ENCODE measurements at regions of chr3 and their contacts with region 1.

Region 1: DNA sequence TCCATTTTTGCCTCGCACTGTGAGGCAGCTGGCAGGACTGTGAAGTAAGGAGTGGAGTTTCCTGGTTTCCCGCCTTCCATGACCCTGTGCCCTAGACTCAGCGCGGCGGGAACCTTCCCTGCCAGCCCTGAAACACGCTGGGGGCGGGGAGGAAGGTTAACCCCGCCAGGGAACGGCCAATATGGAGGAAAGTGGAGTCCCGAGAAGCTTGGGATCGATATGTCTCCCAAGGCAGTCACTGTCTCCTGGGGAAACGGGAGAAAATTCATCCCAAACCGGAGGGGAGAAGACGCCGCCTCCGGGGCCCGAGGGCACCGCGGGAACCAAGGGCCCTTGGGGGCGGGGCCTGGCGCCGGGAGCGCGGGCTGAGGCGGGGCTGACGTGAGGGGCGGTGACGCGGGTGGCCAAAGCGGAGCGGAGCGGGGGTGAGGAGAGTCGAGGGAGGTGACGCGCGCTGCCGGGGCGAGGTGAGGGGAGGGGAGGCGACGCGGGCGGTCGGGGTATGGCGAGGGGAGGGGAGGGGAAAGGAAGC is at the start of gene HMCES:
- DNase-seq: peak; percentile 88 to 98 (median 96)
- ATAC-seq: peak; percentile 94
- H3K4me3 ChIP-seq: peak within 1 kb of the TSS; percentile 59 to 92
- H3K4me3 Mint-ChIP-seq: peak within 1 kb of the TSS; percentile 95
- H3K27ac ChIP-seq: peak within 1 kb of the TSS; percentile 88 to 93
- H3K27ac Mint-ChIP-seq: peak within 1 kb of the TSS; percentile 97
- H3K4me1 ChIP-seq: peaks cover 39% of the 10 kb centered on the region
- H3K4me1 Mint-ChIP-seq: peaks cover 42% of the 10 kb centered on the region
- H3K27me3 ChIP-seq: no peaks in the 10 kb centered on the region
- H3K27me3 Mint-ChIP-seq: no peaks in the 10 kb centered on the region
- CTCF ChIP-seq: no peak
- total RNA-seq, gene HMCES: 69.5 to 78.7 TPM

Region 2: GRCh38 chr3:129160891-129161859 is 117.3 kb before region 1 on chr3 and contains the start of gene ISY1:
- CTCF ChIA-PET with region 1: no interaction called
- POLR2A ChIA-PET with region 1: no interaction called
- intact Hi-C with region 1: loop called in 1 of 2 experiments (anchors 1 kb)
- DNase-seq: peak; percentile 71 to 97 (median 86)
- ATAC-seq: peak; percentile 80
- H3K4me3 ChIP-seq: peak within 1 kb of the TSS; percentile 84 to 94
- H3K4me3 Mint-ChIP-seq: peak within 1 kb of the TSS; percentile 95
- H3K27ac ChIP-seq: peak within 1 kb of the TSS; percentile 92 to 99
- H3K27ac Mint-ChIP-seq: peak within 1 kb of the TSS; percentile 96
- H3K4me1 ChIP-seq: peaks cover 18% of the 10 kb centered on the region
- H3K4me1 Mint-ChIP-seq: peaks cover 43% of the 10 kb centered on the region
- H3K27me3 ChIP-seq: no peaks in the 10 kb centered on the region
- H3K27me3 Mint-ChIP-seq: no peaks in the 10 kb centered on the region
- CTCF ChIP-seq: peak; percentile 70
- total RNA-seq, gene ISY1: 35.2 to 38.7 TPM

Region 3: GRCh38 chr3:129233538-129233937 is 45.0 kb before region 1 on chr3:
- CTCF ChIA-PET with region 1: no interaction called
- POLR2A ChIA-PET with region 1: no interaction called
- intact Hi-C with region 1: no loop called
- DNase-seq: peak in 1 of 9 experiments; percentile 53
- ATAC-seq: peak; percentile 40
- H3K4me3 ChIP-seq: no peak overlapping the region
- H3K4me3 Mint-ChIP-seq: no peak overlapping the region
- H3K27ac ChIP-seq: no peak overlapping the region
- H3K27ac Mint-ChIP-seq: peak overlapping the region; percentile 5
- H3K4me1 ChIP-seq: no peaks in the 10 kb centered on the region
- H3K4me1 Mint-ChIP-seq: peaks cover 5% of the 10 kb centered on the region
- H3K27me3 ChIP-seq: peaks cover 0 to 3% of the 10 kb centered on the region in 2 experiments
- H3K27me3 Mint-ChIP-seq: peaks cover 2% of the 10 kb centered on the region
- CTCF ChIP-seq: no peak

Region 4: GRCh38 chr3:129399145-129399894 is 120.8 kb after region 1 on chr3:
- CTCF ChIA-PET with region 1: no interaction called
- POLR2A ChIA-PET with region 1: interaction called, 5 read pairs
- intact Hi-C with region 1: loop called (anchors 1 kb)
- DNase-seq: peak; percentile 40 to 96 (median 73)
- ATAC-seq: peak; percentile 83
- H3K4me3 ChIP-seq: peak overlapping the region; percentile 63 to 72
- H3K4me3 Mint-ChIP-seq: peak overlapping the region; percentile 98
- H3K27ac ChIP-seq: peak overlapping the region; percentile 73 to 88
- H3K27ac Mint-ChIP-seq: peak overlapping the region; percentile 99
- H3K4me1 ChIP-seq: peaks cover 12% of the 10 kb centered on the region
- H3K4me1 Mint-ChIP-seq: peaks cover 42% of the 10 kb centered on the region
- H3K27me3 ChIP-seq: no peaks in the 10 kb centered on the region
- H3K27me3 Mint-ChIP-seq: no peaks in the 10 kb centered on the region
- CTCF ChIP-seq: peak; percentile 78

Region 5: DNA sequence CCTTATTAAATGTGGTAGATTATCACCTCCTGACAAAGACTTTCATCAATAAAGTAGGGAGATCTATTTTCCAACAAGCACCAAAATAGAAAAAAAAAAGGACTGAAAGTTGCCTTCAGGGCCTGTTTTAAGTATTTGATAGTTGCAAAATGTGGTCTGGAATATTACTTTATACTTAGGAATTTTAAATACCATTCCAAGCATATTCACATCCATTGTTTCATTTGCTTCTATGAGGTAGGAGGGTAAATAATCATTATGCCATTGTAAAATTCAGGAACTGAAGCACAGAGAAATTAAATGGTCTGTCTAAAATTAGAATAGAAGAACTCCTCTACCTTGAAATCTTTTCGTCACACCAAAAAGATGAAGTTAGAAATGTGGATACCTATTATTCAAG is 505.0 kb after region 1 on chr3:
- CTCF ChIA-PET with region 1: no interaction called
- POLR2A ChIA-PET with region 1: no interaction called
- intact Hi-C with region 1: no loop called
- DNase-seq: no peak
- ATAC-seq: no peak
- H3K4me3 ChIP-seq: no peak overlapping the region
- H3K4me3 Mint-ChIP-seq: no peak overlapping the region
- H3K27ac ChIP-seq: no peak overlapping the region
- H3K27ac Mint-ChIP-seq: no peak overlapping the region
- H3K4me1 ChIP-seq: no peaks in the 10 kb centered on the region
- H3K4me1 Mint-ChIP-seq: peaks cover 4% of the 10 kb centered on the region
- H3K27me3 ChIP-seq: no peaks in the 10 kb centered on the region
- H3K27me3 Mint-ChIP-seq: no peaks in the 10 kb centered on the region
- CTCF ChIP-seq: no peak

Measured in CD8-positive, alpha-beta T cell (primary cell).